ENCODE measurements at regions of chr17 and their contacts with region 1.

Region 1: DNA sequence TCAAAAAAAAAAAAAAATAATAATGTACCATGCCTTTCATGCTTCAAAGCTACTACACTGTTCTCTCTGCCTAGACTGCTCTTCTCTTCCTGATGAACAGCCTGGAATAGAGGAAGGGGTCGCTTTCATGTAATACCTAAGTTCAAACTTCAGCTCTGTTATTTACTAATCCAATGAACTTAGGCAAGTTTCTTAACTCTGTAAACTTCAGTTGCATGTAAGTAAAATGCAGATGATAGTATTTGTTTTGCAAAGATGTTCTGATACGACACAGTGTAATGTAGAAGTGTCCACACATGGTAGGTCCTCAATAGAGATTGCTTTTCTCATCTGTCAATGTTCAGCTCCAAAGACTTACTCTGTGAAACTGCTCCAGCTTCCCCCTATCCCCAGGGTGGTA is 6.6 kb downstream of the COA3 start:
- DNase-seq: no peak
- ATAC-seq: no peak
- H3K4me3 ChIP-seq: no peak overlapping the region
- H3K4me3 Mint-ChIP-seq: no peak overlapping the region
- H3K27ac ChIP-seq: no peak overlapping the region
- H3K27ac Mint-ChIP-seq: no peak overlapping the region
- H3K4me1 ChIP-seq: peaks cover 0 to 8% of the 10 kb centered on the region in 2 experiments
- H3K4me1 Mint-ChIP-seq: peaks cover 4 to 11% (median 6%) of the 10 kb centered on the region in 3 donors
- H3K27me3 ChIP-seq: peaks cover 0 to 24% of the 10 kb centered on the region in 2 experiments
- H3K27me3 Mint-ChIP-seq: peaks cover 22 to 29% of the 10 kb centered on the region in 2 donors

Region 2: GRCh38 chr17:42809250-42809649 is 17.3 kb after region 1 on chr17:
- CTCF ChIA-PET with region 1: no interaction called
- POLR2A ChIA-PET with region 1: interaction called in 1 of 2 experiments, 11 read pairs
- DNase-seq: no peak
- ATAC-seq: no peak
- H3K4me3 ChIP-seq: no peak overlapping the region
- H3K4me3 Mint-ChIP-seq: no peak overlapping the region
- H3K27ac ChIP-seq: no peak overlapping the region
- H3K27ac Mint-ChIP-seq: no peak overlapping the region
- H3K4me1 ChIP-seq: no peaks in the 10 kb centered on the region
- H3K4me1 Mint-ChIP-seq: no peaks in the 10 kb centered on the region
- H3K27me3 ChIP-seq: no peaks in the 10 kb centered on the region
- H3K27me3 Mint-ChIP-seq: no peaks in the 10 kb centered on the region